PC-9 (cell line): ENCODE measurements at regions of chr1 and their contacts with region 1.

Region 1: GRCh38 chr1:40668769-40669525 is 3.5 kb upstream of the RIMS3 start:
- DNase-seq: peak; percentile 65 to 85
- H3K4me3 ChIP-seq: peak overlapping the region; percentile 41; the same call in 1 of the 2 replicates
- H3K27ac ChIP-seq: no peak overlapping the region
- H3K4me1 ChIP-seq: peaks cover 6% of the 10 kb centered on the region; the same call in 1 of the 2 replicates
- H3K27me3 ChIP-seq: no peaks in the 10 kb centered on the region
- CTCF ChIP-seq: peak; percentile 97

Region 2: DNA sequence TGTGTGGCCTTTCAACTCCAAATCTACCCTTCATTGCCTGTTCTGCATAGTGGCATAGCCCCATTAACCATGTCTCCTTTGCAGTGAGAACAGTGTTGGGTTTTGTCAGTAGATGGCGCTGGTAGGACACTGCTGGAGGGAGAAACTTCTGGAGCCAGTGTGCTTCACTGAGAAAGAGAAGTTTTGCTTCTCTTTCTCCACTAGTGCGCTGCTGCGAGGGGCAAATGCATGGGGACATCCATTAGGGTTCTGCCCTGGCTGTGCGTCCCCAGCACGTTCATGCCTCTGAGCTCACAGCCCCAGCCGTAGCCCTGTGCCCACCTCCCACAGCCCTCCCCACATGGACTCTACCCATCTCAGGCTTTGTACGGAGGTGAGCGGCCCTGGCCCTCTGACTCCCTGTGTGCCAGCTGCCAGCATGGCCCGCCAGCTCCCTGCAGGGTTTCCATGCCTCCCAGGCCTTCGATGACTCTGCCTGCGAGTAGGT is 56.6 kb before region 1 on chr1:
- CTCF ChIA-PET with region 1: interaction called, 4 read pairs
- POLR2A ChIA-PET with region 1: no interaction called
- intact Hi-C with region 1: loop called (anchors 1 kb)
- DNase-seq: peak; percentile 40 to 65
- H3K4me3 ChIP-seq: no peak overlapping the region
- H3K27ac ChIP-seq: no peak overlapping the region
- H3K4me1 ChIP-seq: no peaks in the 10 kb centered on the region
- H3K27me3 ChIP-seq: no peaks in the 10 kb centered on the region
- CTCF ChIP-seq: peak; percentile 86

Region 3: GRCh38 chr1:40625066-40625465 is 43.9 kb before region 1 on chr1:
- CTCF ChIA-PET with region 1: interaction called, 4 read pairs
- POLR2A ChIA-PET with region 1: no interaction called
- intact Hi-C with region 1: loop called (anchors 1 kb)
- DNase-seq: peak in 1 of 2 experiments; percentile 51
- H3K4me3 ChIP-seq: no peak overlapping the region
- H3K27ac ChIP-seq: no peak overlapping the region
- H3K4me1 ChIP-seq: peaks cover 17% of the 10 kb centered on the region; the same call in 1 of the 2 replicates
- H3K27me3 ChIP-seq: peaks cover 5% of the 10 kb centered on the region; the same call in 1 of the 2 replicates
- CTCF ChIP-seq: peak; percentile 61

Region 4: DNA sequence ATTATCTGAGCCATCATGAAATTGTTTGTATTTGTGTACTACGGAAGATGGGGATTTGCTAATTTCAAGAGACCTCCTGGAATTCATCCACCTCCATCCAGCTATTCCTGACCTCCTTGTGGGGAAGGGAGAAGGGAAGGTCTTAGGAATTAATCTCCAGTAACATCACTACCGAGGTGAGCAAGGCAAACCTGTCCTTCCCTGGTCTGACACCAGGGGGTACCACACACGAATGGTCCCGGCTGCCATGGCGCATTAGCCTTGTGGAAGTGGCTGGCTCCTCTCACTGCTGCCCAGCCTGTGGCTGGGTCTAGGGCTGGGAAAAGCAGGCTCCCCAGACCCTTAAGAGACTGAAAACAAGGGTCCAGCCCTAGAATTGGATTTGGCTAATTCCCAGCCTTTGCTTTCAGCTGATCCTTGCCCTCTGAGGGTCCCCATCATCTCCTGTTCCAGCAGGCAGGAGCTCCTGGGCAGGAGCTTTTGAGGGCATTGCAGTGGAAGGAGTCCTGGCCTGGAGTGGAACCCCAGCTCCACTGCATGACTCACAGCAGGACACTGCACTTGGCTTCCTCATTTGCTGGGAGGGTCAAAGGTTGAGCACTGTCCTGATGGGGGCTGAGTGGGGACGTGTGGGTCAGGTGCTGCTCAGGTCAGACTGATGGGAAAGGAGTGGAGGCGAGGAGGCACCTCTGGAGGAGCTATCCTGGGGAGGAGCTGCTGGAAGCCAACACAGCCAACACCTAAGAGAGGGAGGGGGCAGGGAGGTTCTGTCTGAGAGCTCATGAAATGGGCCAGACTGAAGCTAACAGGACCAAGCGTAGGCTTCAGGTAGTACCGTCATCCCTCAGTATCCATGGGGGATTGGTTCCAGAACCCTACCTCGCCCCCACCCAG is 38.2 kb before region 1 on chr1:
- CTCF ChIA-PET with region 1: no interaction called
- POLR2A ChIA-PET with region 1: no interaction called
- intact Hi-C with region 1: loop called (anchors 1 kb)
- DNase-seq: no peak
- H3K4me3 ChIP-seq: no peak overlapping the region
- H3K27ac ChIP-seq: no peak overlapping the region
- H3K4me1 ChIP-seq: peaks cover 17% of the 10 kb centered on the region; the same call in 1 of the 2 replicates
- H3K27me3 ChIP-seq: no peaks in the 10 kb centered on the region
- CTCF ChIP-seq: peak; percentile 47

Region 5: DNA sequence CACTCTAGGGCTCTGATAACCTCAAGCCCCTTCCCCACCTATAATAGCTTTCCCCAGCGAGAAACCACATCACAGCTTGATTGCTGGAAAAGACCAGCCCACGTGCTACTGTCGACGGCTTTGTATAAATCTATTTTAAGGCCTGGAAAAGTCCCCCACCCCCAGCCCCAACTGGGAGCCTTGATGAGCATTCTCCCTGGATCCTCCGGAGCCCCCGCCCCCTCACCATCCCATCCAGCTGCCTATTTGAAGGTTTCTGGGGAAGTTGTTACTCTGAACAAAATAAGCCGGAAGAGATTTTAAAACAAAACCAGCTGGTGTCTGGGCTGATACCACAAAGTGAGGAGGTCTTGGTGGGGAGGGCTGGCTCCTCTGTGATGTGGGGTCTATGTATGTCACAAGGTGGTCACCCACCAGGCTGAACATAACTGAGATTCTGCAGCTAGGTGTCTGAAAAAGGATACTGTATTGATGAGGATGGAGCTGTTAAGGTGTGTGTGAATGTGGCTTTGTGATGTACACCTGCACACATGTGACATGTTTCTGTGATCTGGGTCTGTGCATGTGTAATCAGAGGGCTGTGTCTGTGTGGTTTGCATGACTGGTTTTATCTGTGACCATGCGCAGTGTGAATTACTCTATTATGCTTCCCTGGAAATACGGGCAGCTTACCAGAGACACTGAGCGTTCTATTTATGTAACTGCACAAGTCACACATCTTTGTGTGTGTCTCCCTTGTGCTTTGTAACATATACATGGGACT is 28.5 kb before region 1 on chr1:
- CTCF ChIA-PET with region 1: interaction called, 22 read pairs
- POLR2A ChIA-PET with region 1: no interaction called
- intact Hi-C with region 1: no loop called
- DNase-seq: no peak
- H3K4me3 ChIP-seq: no peak overlapping the region
- H3K27ac ChIP-seq: no peak overlapping the region
- H3K4me1 ChIP-seq: no peaks in the 10 kb centered on the region
- H3K27me3 ChIP-seq: no peaks in the 10 kb centered on the region
- CTCF ChIP-seq: no peak

Region 6: GRCh38 chr1:40709100-40709801 is 40.3 kb after region 1 on chr1:
- CTCF ChIA-PET with region 1: interaction called, 10 read pairs
- POLR2A ChIA-PET with region 1: interaction called, 5 read pairs
- intact Hi-C with region 1: no loop called
- DNase-seq: peak; percentile 82 to 94
- H3K4me3 ChIP-seq: peak overlapping the region; percentile 62
- H3K27ac ChIP-seq: peak overlapping the region; percentile 21
- H3K4me1 ChIP-seq: peaks cover 43% of the 10 kb centered on the region
- H3K27me3 ChIP-seq: no peaks in the 10 kb centered on the region
- CTCF ChIP-seq: no peak

Region 7: DNA sequence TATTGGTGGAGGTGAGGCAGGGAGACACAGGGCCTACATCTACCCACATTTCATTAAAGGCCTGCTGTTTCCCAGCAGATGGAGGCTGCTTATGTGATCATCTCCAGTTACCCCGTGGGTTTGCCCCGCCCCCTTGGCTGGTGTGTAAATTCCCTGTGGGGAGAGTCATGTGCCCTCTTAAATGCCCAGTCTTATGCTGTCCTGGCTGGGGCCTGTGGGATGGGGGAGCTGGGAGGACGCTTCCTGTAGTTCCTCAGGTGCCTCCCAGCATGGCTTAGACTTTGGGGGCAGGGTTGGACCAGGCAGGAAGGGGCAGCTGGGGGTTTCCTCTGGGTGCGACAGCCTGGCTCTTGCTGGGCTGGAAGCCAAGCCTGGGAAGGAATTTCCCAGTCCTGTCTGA is 208.8 kb after region 1 on chr1:
- CTCF ChIA-PET with region 1: interaction called, 12 read pairs
- POLR2A ChIA-PET with region 1: no interaction called
- intact Hi-C with region 1: no loop called
- DNase-seq: peak; percentile 65 to 82
- H3K4me3 ChIP-seq: no peak overlapping the region
- H3K27ac ChIP-seq: peak overlapping the region; percentile 65
- H3K4me1 ChIP-seq: peaks cover 55% of the 10 kb centered on the region
- H3K27me3 ChIP-seq: no peaks in the 10 kb centered on the region
- CTCF ChIP-seq: no peak